ENCODE measurements at regions of chr3 and their contacts with region 1.

Region 1: GRCh38 chr3:15601397-15602145 is at the starts of genes BTD and HACL1:
- DNase-seq: peak; percentile 98 to 99
- ATAC-seq: peak; percentile 97 to 98
- H3K4me3 ChIP-seq: peak within 1 kb of the TSS; percentile 73 to 94 (median 92)
- H3K27ac ChIP-seq: peak within 1 kb of the TSS; percentile 87 to 92 (median 91)
- H3K4me1 ChIP-seq: peaks cover 24 to 39% of the 10 kb centered on the region in 2 donors
- H3K27me3 ChIP-seq: no peaks in the 10 kb centered on the region
- CTCF ChIP-seq: peak in 4 of 5 experiments; percentile 23 to 37 (median 24)
- POLR2A ChIP-seq: peak; percentile 83
- total RNA-seq, gene BTD: 15.1 to 39.7 (median 26.0) TPM
- total RNA-seq, gene HACL1: 23.5 to 27.1 (median 24.5) TPM

Region 2: GRCh38 chr3:14178247-14179113 is 1423.1 kb before region 1 on chr3 and contains the starts of genes LSM3 and XPC:
- in situ Hi-C with region 1: no loop called
- intact Hi-C with region 1: loop called (anchors 5 kb)
- DNase-seq: peak; percentile 96 to 97
- ATAC-seq: peak; percentile 98
- H3K4me3 ChIP-seq: peak within 1 kb of the TSS; percentile 71 to 86 (median 75)
- H3K27ac ChIP-seq: peak within 1 kb of the TSS; percentile 86 to 91 (median 90)
- H3K4me1 ChIP-seq: peaks cover 31 to 53% of the 10 kb centered on the region in 2 donors
- H3K27me3 ChIP-seq: no peaks in the 10 kb centered on the region
- CTCF ChIP-seq: no peak
- POLR2A ChIP-seq: peak; percentile 95
- total RNA-seq, gene LSM3: 11.6 to 16.8 (median 14.2) TPM
- total RNA-seq, gene XPC: 22.0 to 30.6 (median 27.0) TPM

Region 3: DNA sequence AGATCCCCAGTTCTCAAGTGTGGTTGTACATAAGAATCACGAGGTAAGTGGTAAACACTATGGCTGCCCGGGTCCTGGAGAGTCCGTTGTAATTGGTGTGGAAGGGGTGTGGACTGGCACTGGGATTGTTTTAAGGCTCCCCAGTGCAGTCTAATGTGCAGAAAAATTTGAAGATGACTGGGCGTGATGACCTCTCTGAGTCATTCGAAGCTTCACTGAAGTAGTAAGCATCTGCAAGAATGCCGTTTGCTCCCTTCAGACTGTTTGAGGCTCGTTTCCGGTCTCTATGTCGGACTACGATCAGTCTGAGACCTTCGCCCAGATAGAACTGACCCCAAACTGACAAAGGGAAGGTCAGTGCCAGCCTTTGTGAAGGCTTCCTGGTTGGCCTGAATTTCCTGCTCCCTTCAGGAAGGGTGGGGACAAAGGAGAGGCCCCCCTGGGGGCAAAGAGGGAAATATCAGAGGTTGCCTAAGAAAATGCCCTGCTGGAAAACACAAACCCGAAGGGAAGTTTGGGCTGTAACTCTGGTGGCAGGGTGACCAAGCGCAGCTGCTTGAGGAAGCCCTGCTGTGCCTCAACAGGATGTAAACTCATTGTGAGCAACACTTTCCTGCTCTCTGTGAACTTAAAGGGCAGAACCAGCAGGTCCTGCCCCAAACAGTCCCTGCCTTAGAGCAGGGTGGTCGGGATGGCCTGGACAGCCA is 34.6 kb after region 1 on chr3:
- in situ Hi-C with region 1: no loop called
- intact Hi-C with region 1: loop called (anchors 5 kb)
- DNase-seq: peak in 1 of 2 donors; percentile 29
- ATAC-seq: peak; percentile 16 to 21
- H3K4me3 ChIP-seq: peak overlapping the region in 3 of 4 donors; percentile 8 to 26 (median 11)
- H3K27ac ChIP-seq: peak overlapping the region; percentile 77 to 90 (median 84)
- H3K4me1 ChIP-seq: peaks cover 62 to 66% of the 10 kb centered on the region in 2 donors
- H3K27me3 ChIP-seq: no peaks in the 10 kb centered on the region
- CTCF ChIP-seq: no peak
- POLR2A ChIP-seq: no peak

Region 4: GRCh38 chr3:16264708-16265454 is 663.3 kb after region 1 on chr3 and contains the starts of genes DPH3 and OXNAD1:
- in situ Hi-C with region 1: loop called in 1 of 4 experiments (anchors 25 kb)
- intact Hi-C with region 1: no loop called
- DNase-seq: peak; percentile 100
- ATAC-seq: peak; percentile 93 to 95
- H3K4me3 ChIP-seq: peak within 1 kb of the TSS; percentile 65 to 91 (median 81)
- H3K27ac ChIP-seq: peak within 1 kb of the TSS; percentile 89 to 98 (median 92)
- H3K4me1 ChIP-seq: peaks cover 40 to 43% of the 10 kb centered on the region in 2 donors
- H3K27me3 ChIP-seq: no peaks in the 10 kb centered on the region
- CTCF ChIP-seq: peak; percentile 22 to 36 (median 32)
- POLR2A ChIP-seq: peak; percentile 80 to 90
- total RNA-seq, gene DPH3: 40.3 to 66.6 (median 44.2) TPM
- total RNA-seq, gene OXNAD1: 12.3 to 28.6 (median 17.1) TPM

Region 5: GRCh38 chr3:16529264-16529663 is 927.7 kb after region 1 on chr3:
- in situ Hi-C with region 1: loop called in 1 of 4 experiments (anchors 25 kb)
- intact Hi-C with region 1: no loop called
- DNase-seq: no peak
- ATAC-seq: no peak
- H3K4me3 ChIP-seq: no peak overlapping the region
- H3K27ac ChIP-seq: peak overlapping the region; percentile 84 to 85 (median 84)
- H3K4me1 ChIP-seq: peaks cover 16 to 24% of the 10 kb centered on the region in 2 donors
- H3K27me3 ChIP-seq: no peaks in the 10 kb centered on the region
- CTCF ChIP-seq: no peak
- POLR2A ChIP-seq: no peak